Left cardiac atrium (tissue), 4 donors: ENCODE measurements at regions of chr1 and their contacts with region 1.

Region 1: DNA sequence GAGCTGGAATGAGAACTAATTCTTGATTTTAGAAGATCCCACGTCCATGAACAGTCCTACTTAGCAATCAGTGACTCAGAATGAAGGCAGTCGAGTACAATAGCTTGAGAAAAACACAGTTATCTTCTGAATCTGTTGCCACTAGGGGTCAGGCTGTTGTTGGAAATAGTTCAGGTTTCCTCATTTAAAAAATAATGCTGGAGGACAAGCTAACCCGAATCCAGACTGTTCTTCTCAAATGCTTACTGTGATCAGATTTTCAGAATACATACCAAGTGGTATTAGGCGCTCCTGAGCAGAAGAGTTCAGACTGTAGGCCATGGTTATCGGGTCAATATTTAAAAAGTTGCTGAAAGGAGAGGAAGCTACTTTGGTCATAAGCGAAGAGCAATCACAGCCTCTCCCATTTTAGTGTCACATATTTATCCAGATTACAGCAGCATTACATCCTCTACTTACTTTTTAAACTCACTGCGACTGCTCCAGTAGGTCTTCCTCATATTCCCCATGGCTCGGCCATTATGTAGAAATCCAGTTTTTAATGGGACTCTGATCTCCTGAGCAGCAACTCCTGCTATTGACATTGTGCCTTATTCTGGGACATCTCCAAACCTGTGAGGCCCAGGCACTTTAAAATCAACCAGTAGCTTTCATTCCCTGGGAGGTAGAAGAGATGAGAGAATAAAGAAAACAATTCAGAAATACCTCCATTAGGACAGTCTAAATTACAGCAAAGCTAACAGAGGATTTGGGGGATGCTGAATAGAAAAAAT is 10.9 kb downstream of the ERRFI1 start:
- DNase-seq: no peak
- ATAC-seq: peak; percentile 75

Region 2: GRCh38 chr1:7983086-7983778 is 32.0 kb before region 1 on chr1:
- intact Hi-C with region 1: loop called in 1 of 2 experiments (anchors 5 kb)
- DNase-seq: no peak
- ATAC-seq: peak in 1 of 2 donors; percentile 10